Heart right ventricle (tissue), 16 donors: ENCODE measurements at regions of chr1 and their contacts with region 1.

Region 1: DNA sequence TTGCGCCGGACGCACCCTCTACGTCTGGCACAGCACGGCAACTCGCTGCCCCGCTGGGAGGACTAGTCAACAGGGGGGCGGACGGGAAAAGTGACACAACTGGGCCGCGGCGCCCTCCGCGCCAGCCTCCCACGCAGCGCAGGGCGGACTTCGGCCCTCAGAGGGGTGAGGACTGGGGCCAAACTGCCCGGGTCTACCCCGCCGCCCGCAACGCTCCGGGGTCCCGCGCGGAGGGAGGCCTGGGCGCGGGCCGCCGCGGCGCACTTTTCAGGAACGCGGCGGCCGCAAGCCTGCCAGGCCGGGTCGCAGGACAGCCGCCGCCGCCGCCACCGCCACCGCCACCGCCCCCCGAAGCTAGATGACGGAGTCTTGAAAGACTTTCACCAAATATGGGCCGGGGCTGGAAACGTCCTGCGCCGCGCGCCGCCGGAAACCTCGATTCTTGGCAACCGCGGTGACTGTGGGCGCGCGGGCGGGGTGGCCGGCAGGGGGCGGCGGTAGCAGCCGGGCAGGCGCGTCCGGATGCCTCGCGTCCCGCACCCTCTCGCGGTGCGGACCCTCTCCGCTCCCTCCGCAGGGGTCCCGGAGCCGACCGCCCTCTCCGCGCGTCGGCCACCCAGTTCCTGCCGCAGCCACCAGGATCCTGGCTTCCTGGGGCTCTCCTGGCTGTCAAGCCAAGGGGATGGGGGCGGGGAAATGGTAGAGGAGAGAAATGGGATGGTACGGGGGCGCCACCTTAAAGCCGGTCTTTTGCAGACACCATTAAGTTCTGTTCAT is 3.7 kb upstream of the CCN1 start:
- DNase-seq: peak; percentile 87 to 92
- ATAC-seq: peak; percentile 46 to 78 (median 62)
- H3K4me3 ChIP-seq: peak overlapping the region; percentile 57 to 89 (median 74)
- H3K27ac ChIP-seq: peak overlapping the region; percentile 93 to 100 (median 98)
- H3K4me1 ChIP-seq: peaks cover 0 to 54% (median 40%) of the 10 kb centered on the region in 9 donors
- H3K27me3 ChIP-seq: peaks cover 0 to 63% (median 0%) of the 10 kb centered on the region in 7 donors
- CTCF ChIP-seq: peak; percentile 72 to 91 (median 83)

Region 2: DNA sequence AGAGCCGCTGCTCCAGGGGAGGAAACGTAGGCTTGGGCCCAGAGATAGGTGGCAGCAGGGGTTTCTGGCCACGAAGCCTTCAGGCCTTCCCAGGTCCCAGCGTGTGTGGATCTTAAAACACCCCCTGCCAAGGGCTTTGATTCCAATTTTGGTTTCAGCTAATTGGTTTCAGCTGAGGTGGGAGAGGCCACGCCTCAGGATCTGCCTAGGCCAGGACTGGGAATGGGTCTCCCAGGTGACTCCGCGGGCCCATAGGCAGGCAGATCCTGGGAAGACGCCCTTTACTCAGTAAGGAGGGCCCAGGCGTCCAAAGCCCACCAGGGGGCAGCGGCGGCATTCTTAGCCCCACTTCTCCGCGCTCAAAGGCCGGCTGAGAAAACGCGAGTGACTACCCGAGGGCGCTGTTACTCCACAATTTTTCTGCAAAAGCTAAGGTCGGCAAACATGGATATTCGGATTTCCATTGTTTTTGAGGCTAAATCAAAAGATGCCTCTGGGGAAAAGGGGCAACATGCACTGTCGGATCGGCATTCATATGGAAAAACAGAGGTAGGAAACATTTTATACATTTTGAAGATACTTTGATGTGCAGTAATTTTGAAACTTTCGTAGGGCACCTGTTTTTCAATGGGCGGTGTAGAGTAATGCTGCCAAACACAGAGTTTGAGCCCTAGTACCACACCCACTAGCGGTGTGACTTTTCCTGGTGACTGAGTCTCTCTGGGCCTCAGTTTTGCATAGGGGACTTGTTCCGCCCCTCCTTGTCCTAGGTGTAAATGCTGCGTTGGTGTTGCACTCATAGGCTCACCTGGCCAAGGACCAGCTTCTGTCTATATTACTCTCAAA is 268.6 kb before region 1 on chr1:
- intact Hi-C with region 1: loop called in 9 of 10 experiments (anchors 2 to 10 kb)
- DNase-seq: peak; percentile 89
- ATAC-seq: peak; percentile 95 to 99 (median 97)
- H3K4me3 ChIP-seq: peak overlapping the region in 1 of 10 donors; percentile 14
- H3K27ac ChIP-seq: peak overlapping the region in 1 of 10 donors; percentile 14
- H3K4me1 ChIP-seq: peaks cover 0 to 17% (median 8%) of the 10 kb centered on the region in 9 donors
- H3K27me3 ChIP-seq: peaks cover 0 to 11% (median 0%) of the 10 kb centered on the region in 7 donors
- CTCF ChIP-seq: peak; percentile 96 to 99 (median 98)

Region 3: DNA sequence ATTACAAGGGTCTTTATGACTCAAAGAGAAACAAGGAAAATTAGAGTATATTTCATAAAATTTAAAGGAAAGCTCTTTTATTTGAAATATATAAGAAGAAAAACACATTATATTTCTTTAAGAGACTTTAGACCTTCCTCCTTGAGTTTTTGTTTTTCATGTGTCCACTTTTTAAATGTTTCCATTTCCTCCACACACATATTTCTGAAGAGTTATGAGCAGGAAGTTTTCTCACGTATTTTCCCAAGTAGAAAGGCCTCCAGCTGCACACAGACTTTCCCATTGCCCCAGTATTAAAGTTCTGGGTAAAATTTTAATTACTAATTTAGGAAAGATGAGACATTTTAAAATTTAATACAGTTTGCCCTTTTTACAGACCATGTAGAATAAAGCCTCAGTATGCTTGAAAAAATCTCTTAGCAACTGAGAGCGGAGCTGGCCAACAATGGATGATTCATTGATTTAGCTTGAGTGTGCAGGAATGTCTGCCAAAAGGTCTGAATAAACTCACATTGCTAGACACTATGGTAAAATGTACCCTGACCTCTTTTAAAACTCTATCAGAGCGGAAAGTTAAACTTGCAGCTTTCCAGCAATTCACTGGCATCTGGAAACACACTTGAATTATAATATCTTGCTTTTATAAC is 169.8 kb before region 1 on chr1:
- intact Hi-C with region 1: loop called in 2 of 10 experiments (anchors 5 to 10 kb)
- DNase-seq: peak in 1 of 2 donors; percentile 46
- ATAC-seq: peak; percentile 75 to 97 (median 85)
- H3K4me3 ChIP-seq: no peak overlapping the region
- H3K27ac ChIP-seq: peak overlapping the region in 7 of 10 donors; percentile 41 to 79 (median 56)
- H3K4me1 ChIP-seq: peaks cover 0 to 41% (median 13%) of the 10 kb centered on the region in 9 donors
- H3K27me3 ChIP-seq: no peaks in the 10 kb centered on the region
- CTCF ChIP-seq: no peak

Region 4: DNA sequence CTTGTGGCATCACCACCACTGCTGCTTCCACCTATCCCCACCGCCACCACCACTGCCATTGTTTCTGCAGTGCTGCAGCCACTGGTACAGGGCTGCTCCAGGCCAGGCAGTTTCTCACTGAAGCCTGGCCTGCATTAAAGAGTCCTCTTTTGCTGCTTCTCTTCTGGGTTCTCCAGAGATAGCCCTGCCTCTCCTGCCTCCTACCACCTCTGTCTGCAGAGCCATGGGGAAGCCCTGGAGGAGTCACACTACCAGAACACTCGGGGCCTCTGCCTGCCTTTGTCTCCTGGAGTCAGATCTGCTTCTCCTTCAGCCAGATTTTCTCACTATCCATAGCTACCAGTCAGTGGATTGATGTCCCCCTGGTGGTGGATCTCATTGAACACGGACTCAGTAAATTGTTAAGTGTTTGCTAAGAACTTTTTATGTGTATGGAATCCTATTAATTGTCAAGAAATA is 74.2 kb before region 1 on chr1:
- intact Hi-C with region 1: loop called in 3 of 10 experiments (anchors 5 to 10 kb)
- DNase-seq: peak in 1 of 2 donors; percentile 68
- ATAC-seq: peak; percentile 62 to 94 (median 88)
- H3K4me3 ChIP-seq: no peak overlapping the region
- H3K27ac ChIP-seq: no peak overlapping the region
- H3K4me1 ChIP-seq: peaks cover 0 to 14% (median 0%) of the 10 kb centered on the region in 9 donors
- H3K27me3 ChIP-seq: no peaks in the 10 kb centered on the region
- CTCF ChIP-seq: peak; percentile 22 to 72 (median 58)

Region 5: GRCh38 chr1:85692730-85693314 is 116.0 kb after region 1 on chr1:
- intact Hi-C with region 1: loop called in 7 of 10 experiments (anchors 5 to 10 kb)
- DNase-seq: no peak
- ATAC-seq: peak in 4 of 8 donors; percentile 27 to 50 (median 40)
- H3K4me3 ChIP-seq: no peak overlapping the region
- H3K27ac ChIP-seq: peak overlapping the region in 1 of 10 donors; percentile 5
- H3K4me1 ChIP-seq: peaks cover 0 to 16% (median 2%) of the 10 kb centered on the region in 9 donors
- H3K27me3 ChIP-seq: no peaks in the 10 kb centered on the region
- CTCF ChIP-seq: peak; percentile 18 to 72 (median 52)